ENCODE measurements at regions of chr10 and their contacts with region 1.

Region 1: DNA sequence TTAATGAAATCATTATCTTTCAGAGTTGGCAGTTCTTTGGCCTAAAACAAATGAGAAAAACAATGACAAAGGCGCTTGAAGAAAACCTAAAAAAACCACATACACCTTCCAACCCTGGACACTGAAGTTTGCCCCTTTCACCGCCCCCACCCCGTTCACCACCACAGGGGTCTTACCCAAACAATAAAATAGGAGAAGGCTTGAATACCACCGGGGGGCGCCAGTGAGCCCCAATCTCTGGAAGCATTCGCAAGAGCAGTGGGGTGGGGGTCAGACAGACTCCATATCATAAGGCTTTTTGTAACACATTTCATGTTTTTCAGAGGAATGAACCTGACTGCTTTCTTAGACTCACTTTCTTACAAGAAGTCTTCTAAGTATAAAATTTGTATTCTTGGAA is 163.6 kb downstream of the PIP4K2A start:
- DNase-seq: peak; percentile 54

Region 2: DNA sequence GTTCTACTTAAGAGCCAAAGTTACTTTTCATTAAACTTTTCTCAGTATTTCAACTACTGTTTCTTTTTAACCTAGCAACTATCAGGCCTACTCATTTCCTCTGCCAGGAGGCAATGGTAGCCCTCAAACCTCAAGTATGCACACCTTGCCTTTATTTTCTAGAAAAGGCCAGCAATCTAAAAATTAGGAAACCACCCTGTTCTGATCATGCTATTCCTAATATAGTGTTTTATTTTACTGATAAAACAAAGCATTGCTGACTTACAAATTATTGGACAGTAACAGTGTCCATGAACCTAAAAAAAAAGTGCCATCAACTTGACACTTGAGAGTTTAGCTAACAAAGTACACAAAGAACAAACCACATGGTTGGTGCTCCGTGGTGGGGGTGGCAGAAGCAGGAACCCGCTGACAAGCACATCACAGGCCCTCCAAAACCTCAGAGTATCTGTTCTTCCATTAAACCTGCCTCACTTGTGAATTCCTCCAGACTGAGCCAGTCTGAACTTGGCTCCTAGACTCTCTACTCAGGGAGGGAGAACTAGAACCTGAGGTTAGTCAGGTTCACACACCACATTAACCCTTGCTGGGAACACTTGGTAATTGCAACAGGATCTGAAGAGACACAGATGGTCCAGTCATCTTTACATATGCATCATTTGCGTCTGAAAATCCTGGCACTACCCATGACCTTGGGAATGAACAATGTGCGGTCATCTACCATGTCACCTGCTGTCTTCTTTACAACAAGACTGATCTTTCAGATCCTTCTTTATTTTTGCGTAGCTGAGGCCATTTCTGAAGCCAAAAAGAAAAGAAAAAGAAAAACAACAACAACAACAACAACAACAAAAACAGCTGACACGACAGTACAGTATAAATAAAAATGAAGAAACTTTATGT is 131.8 kb after region 1 on chr10:
- in situ Hi-C with region 1: no loop called
- DNase-seq: peak; percentile 64

Region 3: GRCh38 chr10:22988581-22989360 is 438.0 kb after region 1 on chr10:
- in situ Hi-C with region 1: loop called (anchors 25 kb)
- DNase-seq: peak; percentile 61